Activated CD4-positive, alpha-beta memory T cell treated with anti-CD3 and anti-CD28 coated beads for 36 hours (primary cell): ENCODE measurements at regions of chr2 and their contacts with region 1.

Region 1: GRCh38 chr2:212854771-212855170 is 296.6 kb downstream of the IKZF2 start:
- DNase-seq: no peak
- H3K4me3 Mint-ChIP-seq: no peak overlapping the region
- H3K27ac Mint-ChIP-seq: no peak overlapping the region
- H3K4me1 Mint-ChIP-seq: no peaks in the 10 kb centered on the region
- H3K27me3 Mint-ChIP-seq: no peaks in the 10 kb centered on the region

Region 2: GRCh38 chr2:212777020-212777491 is 77.7 kb before region 1 on chr2:
- CTCF ChIA-PET with region 1: no interaction called
- POLR2A ChIA-PET with region 1: no interaction called
- intact Hi-C with region 1: loop called (anchors 5 kb)
- DNase-seq: no peak
- H3K4me3 Mint-ChIP-seq: no peak overlapping the region
- H3K27ac Mint-ChIP-seq: no peak overlapping the region
- H3K4me1 Mint-ChIP-seq: no peaks in the 10 kb centered on the region
- H3K27me3 Mint-ChIP-seq: no peaks in the 10 kb centered on the region

Region 3: GRCh38 chr2:212892193-212892592 is 37.4 kb after region 1 on chr2:
- CTCF ChIA-PET with region 1: no interaction called
- POLR2A ChIA-PET with region 1: no interaction called
- intact Hi-C with region 1: no loop called
- DNase-seq: no peak
- H3K4me3 Mint-ChIP-seq: no peak overlapping the region
- H3K27ac Mint-ChIP-seq: no peak overlapping the region
- H3K4me1 Mint-ChIP-seq: no peaks in the 10 kb centered on the region
- H3K27me3 Mint-ChIP-seq: no peaks in the 10 kb centered on the region